Activated CD4-positive, alpha-beta T cell treated with anti-CD3 and anti-CD28 coated beads, Interleukin-2, amount 10 ng/mL, durations not matched to agents 7 days and 5 days (primary cell): ENCODE measurements at regions of chr3 and their contacts with region 1.

Region 1: GRCh38 chr3:112314649-112315048 is 18.3 kb upstream of the CD200 start:
- DNase-seq: no peak
- H3K4me3 Mint-ChIP-seq: no peak overlapping the region
- H3K27ac Mint-ChIP-seq: no peak overlapping the region
- H3K4me1 Mint-ChIP-seq: peaks cover under 1% of the 10 kb centered on the region
- H3K27me3 Mint-ChIP-seq: peaks cover 6% of the 10 kb centered on the region

Region 2: DNA sequence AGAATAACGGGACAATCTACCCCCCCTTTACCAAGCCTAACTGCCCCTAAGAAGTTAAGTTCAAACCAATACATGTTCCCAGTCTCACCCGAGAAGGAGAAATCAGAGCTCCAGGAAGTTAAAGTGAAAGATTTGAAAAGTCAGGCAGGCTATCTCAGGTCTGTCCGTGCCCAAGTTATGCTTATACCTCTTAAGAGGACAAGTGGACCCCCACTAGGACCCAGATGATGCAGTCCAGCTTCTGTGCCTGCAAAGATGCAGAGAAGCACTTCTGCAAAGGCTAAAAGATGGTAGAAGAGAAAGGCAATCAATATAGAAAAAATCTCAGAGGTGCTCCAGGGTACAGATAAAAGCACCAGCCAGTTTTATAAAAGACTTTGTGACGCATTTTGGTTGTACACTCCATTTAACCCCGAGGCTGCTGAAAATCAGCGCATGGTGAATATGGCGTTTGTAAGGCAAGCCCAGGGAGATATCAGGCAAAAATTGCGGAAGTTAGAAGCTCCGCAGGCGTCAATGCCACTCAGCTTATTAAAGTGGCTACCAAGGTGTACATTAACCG is 10.8 kb before region 1 on chr3:
- CTCF ChIA-PET with region 1: interaction called, 11 read pairs
- POLR2A ChIA-PET with region 1: no interaction called
- DNase-seq: peak; percentile 15
- H3K4me3 Mint-ChIP-seq: no peak overlapping the region
- H3K27ac Mint-ChIP-seq: no peak overlapping the region
- H3K4me1 Mint-ChIP-seq: peaks cover 3% of the 10 kb centered on the region
- H3K27me3 Mint-ChIP-seq: no peaks in the 10 kb centered on the region